ENCODE measurements at regions of chr11 and their contacts with region 1.

Region 1: DNA sequence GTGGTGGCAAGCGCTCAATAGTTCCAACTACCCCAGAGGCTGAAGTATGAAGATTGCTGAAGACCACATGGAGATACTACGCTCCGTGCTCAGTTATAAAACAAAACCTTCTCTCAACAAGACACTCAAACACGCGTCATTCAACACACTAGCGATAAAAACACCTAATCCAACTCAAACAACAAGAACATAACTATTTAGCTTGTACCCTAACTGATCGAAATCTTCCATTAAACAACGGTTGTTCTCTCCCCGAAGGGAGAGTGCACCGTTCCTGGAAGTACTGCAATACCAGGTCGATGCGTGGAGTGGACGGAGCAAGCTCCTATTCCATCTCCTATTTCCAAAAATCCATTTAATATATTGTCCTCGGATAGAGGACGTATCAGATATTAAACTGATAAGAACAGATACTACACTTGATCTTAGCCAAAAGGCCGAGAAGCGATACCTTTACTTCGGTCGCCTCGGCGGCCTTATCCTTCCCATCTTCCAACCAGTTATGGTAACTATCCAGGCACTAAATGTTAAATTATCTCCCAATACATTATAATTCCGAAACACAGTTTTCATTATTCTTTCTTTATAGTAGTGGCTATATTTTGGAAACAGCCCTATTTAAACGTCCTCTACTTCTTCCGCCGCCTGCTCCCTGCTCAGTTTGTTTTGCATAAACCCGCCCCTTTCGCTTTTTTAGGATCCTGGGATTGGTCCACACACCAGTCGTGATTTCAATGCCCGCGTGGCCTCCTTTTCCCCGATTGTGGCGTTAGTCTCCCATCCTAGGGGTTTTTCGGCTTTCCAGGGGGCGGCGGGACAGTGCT is 2.2 kb upstream of the WDR74 start:
- H3K4me3 ChIP-seq: peak overlapping the region; percentile 42
- H3K27ac ChIP-seq: peak overlapping the region; percentile 92
- H3K4me1 ChIP-seq: no peaks in the 10 kb centered on the region
- CTCF ChIP-seq: 0 out of 2 replicates have a peak, but pooled peaks have one; percentile 37

Region 2: GRCh38 chr11:62665075-62665598 is 176.4 kb before region 1 on chr11 and contains the starts of genes C11orf98 and CSKMT:
- CTCF ChIA-PET with region 1: no interaction called
- POLR2A ChIA-PET with region 1: interaction called, 15 read pairs
- H3K4me3 ChIP-seq: peak within 1 kb of the TSS; percentile 89
- H3K27ac ChIP-seq: peak within 1 kb of the TSS; percentile 66
- H3K4me1 ChIP-seq: no peaks in the 10 kb centered on the region
- CTCF ChIP-seq: no peak

Region 3: DNA sequence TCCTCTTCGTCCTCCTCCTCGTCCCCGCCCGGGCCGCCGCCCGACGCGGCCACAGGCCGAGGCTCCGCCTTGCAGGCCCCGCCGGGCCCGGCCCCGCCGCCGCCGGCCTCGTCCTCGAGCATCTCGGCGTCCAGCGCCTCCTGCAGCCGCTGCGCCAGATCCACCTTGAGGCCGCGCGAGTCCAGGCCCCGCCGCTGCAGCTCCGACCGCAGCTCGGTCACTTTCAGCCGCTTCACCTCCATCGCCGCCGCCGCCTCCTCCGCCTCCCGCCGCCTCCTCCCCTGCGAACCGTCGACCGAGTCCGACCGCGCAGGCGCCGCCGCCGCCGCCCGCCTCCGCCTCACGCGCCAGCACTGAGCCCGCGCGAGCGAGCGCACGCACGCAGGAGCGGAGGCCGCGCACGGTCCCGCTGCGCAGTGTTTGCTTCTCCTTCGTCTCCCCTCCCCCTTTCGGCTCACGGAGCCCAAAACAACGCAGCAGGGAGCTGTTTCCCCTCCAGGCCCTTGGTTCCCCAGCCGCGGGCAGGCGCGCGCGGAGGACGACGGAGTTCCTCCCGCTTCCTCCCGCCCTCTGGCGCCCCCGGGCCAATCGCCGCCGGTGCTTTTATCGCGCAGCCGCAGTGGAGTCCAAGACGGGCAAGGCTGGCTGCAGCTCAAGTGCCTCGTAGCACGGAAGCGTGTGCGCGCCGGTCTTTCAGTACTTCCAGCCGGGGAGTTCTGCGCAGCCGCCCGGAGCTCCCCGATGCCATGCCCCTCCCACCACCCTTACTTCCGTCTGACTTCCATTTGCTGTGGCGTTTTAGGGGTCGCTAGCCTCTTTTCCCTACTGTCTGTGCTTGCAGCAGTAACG is 114.4 kb before region 1 on chr11 and contains the start of gene HNRNPUL2:
- CTCF ChIA-PET with region 1: no interaction called
- POLR2A ChIA-PET with region 1: interaction called, 58 read pairs
- H3K4me3 ChIP-seq: peak within 1 kb of the TSS; percentile 93
- H3K27ac ChIP-seq: peak within 1 kb of the TSS; percentile 98
- H3K4me1 ChIP-seq: peaks cover 4% of the 10 kb centered on the region; the same call in 1 of the 2 replicates
- CTCF ChIP-seq: no peak

Region 4: DNA sequence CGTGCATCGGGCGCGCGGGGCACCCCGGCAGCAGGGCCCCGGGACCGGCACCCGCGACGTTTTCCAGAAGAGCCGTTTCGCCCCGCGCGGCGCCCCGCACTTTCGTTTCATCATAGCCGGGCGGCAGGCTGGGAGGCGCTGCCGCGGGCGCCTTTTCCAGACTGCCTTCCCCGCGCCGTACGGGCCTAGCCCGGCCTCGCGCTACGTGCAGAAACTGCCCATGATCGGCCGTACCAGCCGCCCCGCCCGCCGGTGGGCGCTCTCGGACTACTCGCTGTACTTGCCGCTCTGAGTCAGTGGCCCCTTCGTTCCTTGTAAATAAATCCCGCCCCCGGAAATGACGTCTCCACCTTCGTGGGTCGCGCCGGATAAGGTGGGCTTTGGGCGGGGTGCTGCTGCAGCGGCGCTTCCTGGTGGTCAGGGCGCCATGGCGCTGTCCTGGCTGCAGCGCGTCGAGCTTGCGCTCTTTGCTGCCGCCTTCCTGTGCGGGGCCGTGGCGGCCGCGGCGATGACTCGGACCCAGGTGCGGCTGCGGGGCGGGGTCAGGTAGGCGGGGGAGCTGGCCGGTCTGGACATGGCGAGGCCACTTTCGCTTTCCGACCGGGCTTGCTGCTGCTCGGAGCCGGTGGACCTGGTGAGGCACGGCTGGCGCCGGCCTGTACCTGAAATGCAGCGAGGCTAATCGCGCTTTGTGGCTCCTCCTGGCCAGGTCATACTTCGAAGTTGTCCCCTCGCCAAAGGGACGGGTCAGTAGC is 54.4 kb before region 1 on chr11 and contains the start of gene TMEM179B:
- CTCF ChIA-PET with region 1: interaction called, 9 read pairs
- POLR2A ChIA-PET with region 1: interaction called, 54 read pairs
- H3K4me3 ChIP-seq: peak within 1 kb of the TSS; percentile 87
- H3K27ac ChIP-seq: peak within 1 kb of the TSS; percentile 76
- H3K4me1 ChIP-seq: no peaks in the 10 kb centered on the region
- CTCF ChIP-seq: peak; percentile 97

Region 5: DNA sequence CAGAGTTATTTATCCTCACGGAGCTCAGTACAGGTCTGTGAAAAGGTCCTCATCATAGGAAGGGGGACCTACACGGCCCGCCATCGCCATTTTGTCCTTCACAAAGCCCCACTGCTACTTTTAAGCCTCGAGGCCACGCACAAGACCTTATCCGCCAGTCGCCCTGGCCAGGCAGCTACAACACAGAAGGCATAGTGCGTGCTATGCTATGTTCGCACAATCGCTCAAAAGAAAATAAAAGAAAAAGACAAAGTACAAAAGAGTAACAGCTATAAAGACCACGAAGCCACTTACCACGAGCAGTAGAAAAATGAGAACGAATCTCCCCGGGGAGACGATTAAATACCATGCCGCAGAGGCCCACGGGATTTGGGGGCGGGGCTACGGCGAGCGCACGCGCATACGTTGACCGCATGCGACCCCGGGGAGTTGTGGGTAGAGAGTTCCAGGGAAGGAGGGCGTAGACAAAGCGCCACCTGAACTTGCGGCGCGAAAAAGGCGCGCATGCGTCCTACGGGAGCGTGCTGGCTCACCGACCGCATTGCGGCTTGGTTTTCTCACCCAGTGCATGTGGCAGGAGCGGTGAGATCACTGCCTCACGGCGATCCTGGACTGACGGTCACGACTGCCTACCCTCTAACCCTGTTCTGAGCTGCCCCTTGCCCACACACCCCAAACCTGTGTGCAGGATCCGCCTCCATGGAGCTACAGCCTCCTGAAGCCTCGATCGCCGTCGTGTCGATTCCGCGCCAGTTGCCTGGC is 14.2 kb after region 1 on chr11:
- CTCF ChIA-PET with region 1: no interaction called
- POLR2A ChIA-PET with region 1: interaction called, 182 read pairs
- H3K4me3 ChIP-seq: peak overlapping the region; percentile 88
- H3K27ac ChIP-seq: peak overlapping the region; percentile 82
- H3K4me1 ChIP-seq: no peaks in the 10 kb centered on the region
- CTCF ChIP-seq: no peak

Region 6: GRCh38 chr11:62889484-62890437 is 48.2 kb after region 1 on chr11:
- CTCF ChIA-PET with region 1: no interaction called
- POLR2A ChIA-PET with region 1: interaction called, 91 read pairs
- H3K4me3 ChIP-seq: no peak overlapping the region
- H3K27ac ChIP-seq: no peak overlapping the region
- H3K4me1 ChIP-seq: no peaks in the 10 kb centered on the region
- CTCF ChIP-seq: no peak

Measured in HEK293 (cell line).